ENCODE measurements at regions of chr1 and their contacts with region 1.

Region 1: DNA sequence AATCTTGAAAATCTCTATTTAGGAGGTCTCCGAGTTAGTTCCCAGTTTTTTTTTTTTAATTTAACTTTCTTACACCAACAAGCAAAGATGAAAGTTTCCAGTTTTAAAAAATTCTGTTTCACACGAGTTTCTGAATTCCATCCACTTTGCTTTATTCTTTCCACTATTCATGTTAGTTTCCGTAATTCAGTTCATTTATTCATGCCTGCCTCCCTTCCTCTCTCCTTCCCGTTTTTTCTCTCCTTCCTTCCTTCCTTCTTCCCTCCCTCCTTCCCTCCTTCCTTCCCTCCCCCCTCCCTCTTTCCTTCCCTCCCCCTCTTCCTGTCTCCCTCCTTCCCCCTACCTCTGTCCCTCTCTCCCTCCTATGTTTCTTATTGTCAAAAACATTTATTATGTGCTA is 22.3 kb downstream of the ADGRL2 start:
- DNase-seq: no peak
- H3K4me3 ChIP-seq: no peak overlapping the region
- H3K27me3 ChIP-seq: no peaks in the 10 kb centered on the region
- CTCF ChIP-seq: no peak

Region 2: DNA sequence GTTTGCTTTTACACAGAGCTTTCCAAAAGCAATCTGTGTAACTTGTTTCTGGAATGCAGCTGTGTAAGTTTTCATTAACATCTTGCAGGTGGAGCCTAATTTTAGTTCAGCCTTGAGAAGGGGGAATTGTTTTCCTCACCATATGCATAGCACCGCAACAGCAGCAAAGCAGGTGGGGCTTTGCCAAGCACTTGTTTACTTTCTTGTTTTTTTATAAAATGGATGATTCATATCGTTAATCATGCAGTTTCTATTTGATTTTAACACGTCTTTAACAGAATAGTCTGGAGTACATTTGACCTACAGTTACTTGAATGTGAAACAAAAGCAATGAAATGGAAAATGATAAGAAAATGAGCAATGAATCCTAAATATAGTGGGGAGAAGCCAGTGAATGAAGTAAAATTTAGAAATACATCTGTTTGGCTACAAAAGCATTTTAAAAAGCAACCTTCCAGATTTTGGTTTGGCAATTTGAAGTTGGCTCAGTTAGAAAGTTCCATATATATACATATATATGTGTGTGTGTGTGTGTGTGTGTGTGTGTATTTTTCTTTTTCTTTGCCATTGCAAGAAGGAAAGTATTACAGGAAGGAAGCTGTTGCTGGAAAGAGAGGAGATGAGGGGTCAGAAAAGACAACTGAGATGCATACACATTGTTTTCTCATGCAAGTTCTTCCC is 141.4 kb before region 1 on chr1:
- CTCF ChIA-PET with region 1: no interaction called
- POLR2A ChIA-PET with region 1: interaction called, 12 read pairs
- DNase-seq: no peak
- H3K4me3 ChIP-seq: no peak overlapping the region
- H3K27me3 ChIP-seq: no peaks in the 10 kb centered on the region
- CTCF ChIP-seq: no peak

Region 3: DNA sequence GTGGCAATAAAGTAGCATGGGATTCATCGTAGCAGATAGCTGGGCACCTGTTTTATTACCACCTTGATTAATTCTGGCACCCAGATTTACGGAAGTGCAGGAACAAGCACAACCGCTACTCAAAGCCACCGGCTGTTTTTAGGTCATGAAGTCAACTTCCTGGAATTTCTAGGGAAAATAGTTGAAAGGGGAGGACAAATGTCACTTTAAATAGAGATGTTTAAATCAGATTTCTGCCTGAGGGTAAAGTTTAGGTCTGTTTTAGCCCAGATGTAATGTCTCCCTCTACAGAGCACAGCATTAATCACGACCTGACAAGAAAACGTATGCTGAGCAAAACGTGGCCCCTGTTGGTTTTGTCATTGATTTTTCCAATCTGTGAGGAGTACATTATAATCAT is 14.3 kb before region 1 on chr1:
- CTCF ChIA-PET with region 1: no interaction called
- POLR2A ChIA-PET with region 1: no interaction called
- DNase-seq: no peak
- H3K4me3 ChIP-seq: no peak overlapping the region
- H3K27me3 ChIP-seq: peaks cover 1% of the 10 kb centered on the region; the same call in 1 of the 2 replicates
- CTCF ChIP-seq: no peak

Measured in BJ (cell line).